ENCODE measurements at regions of chr20 and their contacts with region 1.

Region 1: GRCh38 chr20:48319960-48320584 is 507.7 kb downstream of the PREX1 start:
- DNase-seq: no peak
- ATAC-seq: no peak
- H3K4me3 ChIP-seq: no peak overlapping the region
- H3K27ac ChIP-seq: no peak overlapping the region
- H3K4me1 ChIP-seq: no peaks in the 10 kb centered on the region
- H3K27me3 ChIP-seq: no peaks in the 10 kb centered on the region
- CTCF ChIP-seq: no peak
- POLR2A ChIP-seq: no peak

Region 2: GRCh38 chr20:48215291-48215928 is 104.7 kb before region 1 on chr20:
- in situ Hi-C with region 1: loop called in 1 of 4 experiments (anchors 25 kb)
- intact Hi-C with region 1: no loop called
- DNase-seq: no peak
- ATAC-seq: no peak
- H3K4me3 ChIP-seq: no peak overlapping the region
- H3K27ac ChIP-seq: no peak overlapping the region
- H3K4me1 ChIP-seq: no peaks in the 10 kb centered on the region
- H3K27me3 ChIP-seq: no peaks in the 10 kb centered on the region
- CTCF ChIP-seq: no peak
- POLR2A ChIP-seq: no peak

Measured in gastrocnemius medialis (tissue), 4 donors.